ENCODE measurements at regions of chr4 and their contacts with region 1.

Region 1: DNA sequence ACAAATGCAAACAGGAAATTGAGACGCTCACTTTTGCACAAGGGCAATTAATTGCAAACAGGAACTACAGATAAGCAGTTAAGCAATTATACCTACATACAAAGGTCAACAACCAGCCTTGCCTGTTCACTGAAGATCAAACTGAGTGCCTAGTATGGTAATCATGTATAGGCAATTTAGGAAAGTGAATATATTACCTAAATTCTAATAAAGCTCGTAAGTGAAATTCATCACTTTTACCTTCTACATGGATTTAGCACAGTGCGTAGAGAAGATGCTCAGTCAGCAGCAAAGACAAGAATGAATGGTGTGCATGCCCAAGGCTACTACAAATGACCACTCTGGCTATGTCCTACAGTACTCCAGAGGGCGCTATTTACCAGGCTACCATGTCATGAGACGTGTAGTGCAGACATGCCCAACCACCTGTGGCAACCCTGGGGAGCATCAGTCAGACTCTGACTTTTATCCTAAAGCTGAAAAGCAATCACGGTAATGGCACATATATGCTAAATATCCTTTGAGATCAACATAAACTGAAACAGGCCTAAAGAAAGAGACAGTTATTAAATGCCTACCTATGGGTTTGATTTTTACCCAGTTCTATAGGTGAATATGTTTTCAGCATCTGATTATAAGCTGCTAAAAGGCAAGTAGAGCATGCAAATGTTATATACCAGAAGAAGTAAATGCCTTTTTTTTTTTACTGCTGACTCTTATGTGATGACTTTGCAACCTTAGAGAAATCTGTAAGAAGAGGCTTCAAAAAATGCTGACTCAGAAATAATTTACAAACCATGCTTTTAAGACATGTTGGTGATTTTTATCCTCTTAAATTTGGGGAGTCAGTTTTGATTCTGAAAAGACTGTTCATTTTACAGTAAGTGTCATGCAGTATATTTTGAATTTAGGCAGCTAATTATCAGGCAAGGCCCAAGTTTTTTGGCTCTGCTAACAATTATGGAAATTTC is 178.0 kb downstream of the PPP3CA start:
- DNase-seq: peak in 34 of 35 experiments; percentile 15 to 78 (median 44)
- ATAC-seq: peak; percentile 71 to 85 (median 78)
- H3K4me3 ChIP-seq: no peak overlapping the region
- H3K4me3 Mint-ChIP-seq: no peak overlapping the region
- H3K27ac ChIP-seq: no peak overlapping the region
- H3K27ac Mint-ChIP-seq: no peak overlapping the region
- H3K4me1 ChIP-seq: no peaks in the 10 kb centered on the region
- H3K4me1 Mint-ChIP-seq: peaks cover 0 to 7% (median 0%) of the 10 kb centered on the region in 3 donors
- H3K27me3 ChIP-seq: no peaks in the 10 kb centered on the region
- H3K27me3 Mint-ChIP-seq: no peaks in the 10 kb centered on the region

Region 2: DNA sequence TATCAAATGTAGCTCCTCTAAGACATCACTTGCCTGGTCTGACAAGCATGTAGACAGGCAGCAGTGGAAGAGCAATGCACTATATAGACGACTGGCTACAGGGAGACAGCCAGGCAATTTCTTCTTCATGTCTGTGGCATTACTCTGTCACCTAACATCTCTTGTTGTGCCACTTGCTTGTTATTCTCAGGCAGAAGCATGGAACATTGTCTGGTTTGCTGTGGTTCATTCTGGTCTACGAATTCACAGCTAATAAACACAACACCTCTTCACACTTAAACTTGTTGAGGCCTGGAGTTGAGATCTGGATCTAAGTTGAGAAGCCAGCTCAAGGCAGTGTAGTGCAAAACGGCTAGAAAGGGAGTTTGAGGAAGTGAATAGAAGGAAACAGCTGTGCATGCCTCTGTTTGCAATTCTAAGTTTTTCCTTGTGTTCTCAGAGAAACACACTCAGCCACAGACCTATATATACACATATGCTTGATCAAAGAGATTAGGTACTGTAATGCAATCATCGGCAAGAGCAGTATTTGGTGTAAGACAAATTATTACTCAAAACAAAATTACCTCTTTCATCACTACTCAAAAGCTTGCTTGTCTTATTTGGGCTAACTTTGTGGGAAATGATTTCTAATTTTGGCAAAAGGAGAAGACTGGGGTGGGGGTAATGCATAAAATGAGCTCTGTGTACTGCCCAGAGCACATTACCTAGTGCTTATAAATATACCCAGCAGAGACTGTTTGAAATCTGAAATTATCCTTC is 65.8 kb before region 1 on chr4:
- CTCF ChIA-PET with region 1: no interaction called
- POLR2A ChIA-PET with region 1: no interaction called
- DNase-seq: peak in 1 of 35 experiments; percentile 7
- ATAC-seq: peak in 1 of 4 experiments; percentile 33
- H3K4me3 ChIP-seq: no peak overlapping the region
- H3K4me3 Mint-ChIP-seq: no peak overlapping the region
- H3K27ac ChIP-seq: no peak overlapping the region
- H3K27ac Mint-ChIP-seq: peak overlapping the region in 1 of 2 donors; percentile 28
- H3K4me1 ChIP-seq: peaks cover 2 to 9% of the 10 kb centered on the region in 2 experiments
- H3K4me1 Mint-ChIP-seq: peaks cover 12 to 30% (median 24%) of the 10 kb centered on the region in 3 donors
- H3K27me3 ChIP-seq: no peaks in the 10 kb centered on the region
- H3K27me3 Mint-ChIP-seq: no peaks in the 10 kb centered on the region

Region 3: DNA sequence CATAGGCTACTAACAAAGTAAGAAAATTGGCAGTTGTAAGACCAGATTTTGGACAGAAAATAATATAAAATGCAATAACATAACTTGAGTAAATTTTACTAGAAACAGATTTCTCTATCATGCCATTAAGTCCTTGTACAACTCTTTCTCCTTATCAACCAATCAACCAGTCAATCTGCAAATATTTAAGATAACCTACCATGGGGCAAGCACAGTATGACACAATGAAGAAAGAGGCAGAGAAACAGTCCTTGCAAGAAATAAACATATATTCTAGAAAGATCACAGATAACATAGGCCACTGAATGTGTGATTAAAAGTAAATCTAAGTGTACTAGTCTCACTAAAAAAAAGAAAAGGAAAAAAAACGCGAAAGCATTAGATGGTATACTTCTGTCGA is 16.8 kb before region 1 on chr4:
- CTCF ChIA-PET with region 1: no interaction called
- POLR2A ChIA-PET with region 1: no interaction called
- DNase-seq: no peak
- ATAC-seq: no peak
- H3K4me3 ChIP-seq: no peak overlapping the region
- H3K4me3 Mint-ChIP-seq: no peak overlapping the region
- H3K27ac ChIP-seq: no peak overlapping the region
- H3K27ac Mint-ChIP-seq: no peak overlapping the region
- H3K4me1 ChIP-seq: no peaks in the 10 kb centered on the region
- H3K4me1 Mint-ChIP-seq: peaks cover 26 to 49% (median 39%) of the 10 kb centered on the region in 3 donors
- H3K27me3 ChIP-seq: no peaks in the 10 kb centered on the region
- H3K27me3 Mint-ChIP-seq: no peaks in the 10 kb centered on the region

Region 4: DNA sequence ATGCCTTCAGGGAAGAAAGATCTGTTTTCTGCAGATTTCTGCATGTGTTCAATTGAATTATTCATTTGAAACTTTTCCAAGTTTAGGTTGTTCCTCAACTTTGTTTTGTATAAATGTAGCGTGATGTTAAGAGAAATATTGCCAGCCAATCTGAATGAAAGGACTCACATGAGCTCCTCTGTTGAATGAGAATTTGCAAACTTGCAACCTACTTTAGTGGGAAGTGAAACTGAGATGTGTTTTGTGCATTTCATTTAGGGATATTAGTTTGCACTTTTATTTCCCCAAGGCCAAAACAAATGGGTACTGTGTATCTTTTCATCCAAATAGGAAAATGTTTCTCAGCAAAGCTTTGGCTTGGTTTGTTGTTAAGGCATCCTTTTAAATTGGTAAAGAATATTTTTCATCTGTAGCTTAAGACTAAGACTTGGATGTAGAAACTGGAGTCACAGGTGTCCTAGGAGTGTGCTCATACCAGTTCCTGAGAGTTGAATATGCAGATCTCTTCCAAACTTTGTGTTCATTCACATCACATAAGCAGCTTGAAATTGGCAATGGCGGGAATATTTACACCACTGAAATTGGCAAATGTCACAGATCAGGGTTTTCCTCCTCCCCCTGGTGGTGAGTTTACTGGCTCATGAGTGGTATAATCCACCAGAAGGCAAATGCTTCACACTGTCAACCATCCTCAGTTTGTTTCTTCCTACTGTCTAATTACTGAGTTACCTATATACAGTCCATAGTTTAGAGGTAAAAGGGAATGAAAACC is 427.6 kb after region 1 on chr4:
- CTCF ChIA-PET with region 1: interaction called, 4 to 14 read pairs
- POLR2A ChIA-PET with region 1: no interaction called
- DNase-seq: peak in 23 of 35 experiments; percentile 2 to 64 (median 15)
- ATAC-seq: peak in 1 of 4 experiments; percentile 23
- H3K4me3 ChIP-seq: no peak overlapping the region
- H3K4me3 Mint-ChIP-seq: no peak overlapping the region
- H3K27ac ChIP-seq: no peak overlapping the region
- H3K27ac Mint-ChIP-seq: no peak overlapping the region
- H3K4me1 ChIP-seq: no peaks in the 10 kb centered on the region
- H3K4me1 Mint-ChIP-seq: peaks cover 0 to 2% (median 0%) of the 10 kb centered on the region in 3 donors
- H3K27me3 ChIP-seq: no peaks in the 10 kb centered on the region
- H3K27me3 Mint-ChIP-seq: peaks cover 0 to 4% of the 10 kb centered on the region in 2 donors

Region 5: DNA sequence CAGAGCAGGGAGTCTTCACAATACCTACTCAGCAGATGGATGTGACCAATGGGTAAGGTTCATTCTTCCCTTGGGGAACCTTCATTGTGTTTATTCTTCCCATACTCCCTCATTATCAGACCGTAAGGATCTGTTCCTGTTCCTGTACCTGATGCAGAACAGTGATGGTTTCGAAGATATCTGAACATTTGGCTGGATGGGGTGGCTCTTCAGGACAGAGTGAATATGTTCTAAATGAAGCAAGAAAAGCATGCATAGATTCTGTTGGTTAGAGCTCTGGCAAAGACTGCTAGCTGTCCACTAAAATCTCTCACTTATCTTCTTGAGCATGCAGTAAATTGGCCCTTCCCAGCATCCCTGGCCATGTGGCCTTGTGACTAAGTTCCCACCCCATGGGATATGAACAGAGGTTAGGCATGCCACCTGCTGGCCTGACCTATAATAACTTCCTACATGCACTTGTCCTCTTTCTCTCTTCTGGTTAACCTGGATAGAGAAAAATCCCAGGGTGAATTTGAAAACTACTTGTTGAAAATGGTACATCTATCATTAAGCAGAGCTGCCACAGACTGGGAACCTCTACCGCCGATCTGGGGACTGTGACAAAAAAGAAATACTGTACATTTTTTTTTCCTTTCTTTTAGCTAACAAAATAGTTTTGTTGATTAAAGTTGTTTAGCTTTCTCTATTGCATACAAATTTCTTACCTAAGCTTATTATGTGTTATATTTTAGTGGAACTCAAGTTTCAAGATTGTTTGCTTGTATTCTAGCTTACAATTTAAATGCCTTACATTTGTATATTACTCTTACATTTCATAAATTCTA is 561.2 kb after region 1 on chr4:
- CTCF ChIA-PET with region 1: interaction called, 9 to 25 read pairs
- POLR2A ChIA-PET with region 1: no interaction called
- DNase-seq: peak in 31 of 35 experiments; percentile 0 to 67 (median 19)
- ATAC-seq: peak in 3 of 4 experiments; percentile 56 to 68 (median 65)
- H3K4me3 ChIP-seq: no peak overlapping the region
- H3K4me3 Mint-ChIP-seq: no peak overlapping the region
- H3K27ac ChIP-seq: no peak overlapping the region
- H3K27ac Mint-ChIP-seq: no peak overlapping the region
- H3K4me1 ChIP-seq: no peaks in the 10 kb centered on the region
- H3K4me1 Mint-ChIP-seq: peaks cover 0 to 1% (median 0%) of the 10 kb centered on the region in 3 donors
- H3K27me3 ChIP-seq: no peaks in the 10 kb centered on the region
- H3K27me3 Mint-ChIP-seq: peaks cover 1 to 9% of the 10 kb centered on the region in 2 donors